Prostate gland (tissue), 2 donors: ENCODE measurements at regions of chr5 and their contacts with region 1.

Region 1: GRCh38 chr5:167723254-167723871 is 568.1 kb upstream of the WWC1 start:
- DNase-seq: peak; percentile 64
- H3K4me3 ChIP-seq: no peak overlapping the region
- H3K27ac ChIP-seq: no peak overlapping the region
- H3K4me1 ChIP-seq: no peaks in the 10 kb centered on the region
- H3K27me3 ChIP-seq: no peaks in the 10 kb centered on the region
- CTCF ChIP-seq: peak; percentile 80 to 89 (median 82)
- POLR2A ChIP-seq: no peak

Region 2: GRCh38 chr5:167770461-167770860 is 47.1 kb after region 1 on chr5:
- intact Hi-C with region 1: no loop called
- DNase-seq: no peak
- H3K4me3 ChIP-seq: no peak overlapping the region
- H3K27ac ChIP-seq: no peak overlapping the region
- H3K4me1 ChIP-seq: no peaks in the 10 kb centered on the region
- H3K27me3 ChIP-seq: no peaks in the 10 kb centered on the region
- CTCF ChIP-seq: no peak
- POLR2A ChIP-seq: no peak

Region 3: DNA sequence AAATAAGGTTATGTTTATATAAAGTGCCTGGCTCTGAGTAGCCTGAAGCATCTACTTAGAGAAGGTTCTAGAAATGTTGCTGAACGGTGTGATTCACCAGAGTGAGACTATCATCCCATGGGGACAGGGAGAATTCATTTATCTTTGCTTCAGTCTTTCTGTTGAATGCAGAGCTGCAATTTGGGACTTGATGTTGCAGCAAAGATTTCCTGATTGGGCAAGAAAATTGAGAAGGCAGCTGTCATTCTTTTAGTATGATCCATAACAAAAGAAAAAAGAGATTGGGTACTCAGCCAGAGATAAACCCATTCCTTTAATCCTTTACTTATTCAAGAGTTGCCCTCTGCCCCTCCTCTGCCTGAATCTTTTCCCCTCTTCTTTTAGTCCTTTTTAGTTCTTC is 111.8 kb after region 1 on chr5:
- intact Hi-C with region 1: loop called (anchors 10 kb)
- DNase-seq: no peak
- H3K4me3 ChIP-seq: no peak overlapping the region
- H3K27ac ChIP-seq: no peak overlapping the region
- H3K4me1 ChIP-seq: no peaks in the 10 kb centered on the region
- H3K27me3 ChIP-seq: no peaks in the 10 kb centered on the region
- CTCF ChIP-seq: no peak
- POLR2A ChIP-seq: no peak

Region 4: GRCh38 chr5:168020542-168021294 is 297.4 kb after region 1 on chr5:
- intact Hi-C with region 1: loop called (anchors 5 kb)
- DNase-seq: no peak
- H3K4me3 ChIP-seq: no peak overlapping the region
- H3K27ac ChIP-seq: no peak overlapping the region
- H3K4me1 ChIP-seq: no peaks in the 10 kb centered on the region
- H3K27me3 ChIP-seq: no peaks in the 10 kb centered on the region
- CTCF ChIP-seq: peak in 1 of 4 experiments; percentile 25
- POLR2A ChIP-seq: no peak

Region 5: DNA sequence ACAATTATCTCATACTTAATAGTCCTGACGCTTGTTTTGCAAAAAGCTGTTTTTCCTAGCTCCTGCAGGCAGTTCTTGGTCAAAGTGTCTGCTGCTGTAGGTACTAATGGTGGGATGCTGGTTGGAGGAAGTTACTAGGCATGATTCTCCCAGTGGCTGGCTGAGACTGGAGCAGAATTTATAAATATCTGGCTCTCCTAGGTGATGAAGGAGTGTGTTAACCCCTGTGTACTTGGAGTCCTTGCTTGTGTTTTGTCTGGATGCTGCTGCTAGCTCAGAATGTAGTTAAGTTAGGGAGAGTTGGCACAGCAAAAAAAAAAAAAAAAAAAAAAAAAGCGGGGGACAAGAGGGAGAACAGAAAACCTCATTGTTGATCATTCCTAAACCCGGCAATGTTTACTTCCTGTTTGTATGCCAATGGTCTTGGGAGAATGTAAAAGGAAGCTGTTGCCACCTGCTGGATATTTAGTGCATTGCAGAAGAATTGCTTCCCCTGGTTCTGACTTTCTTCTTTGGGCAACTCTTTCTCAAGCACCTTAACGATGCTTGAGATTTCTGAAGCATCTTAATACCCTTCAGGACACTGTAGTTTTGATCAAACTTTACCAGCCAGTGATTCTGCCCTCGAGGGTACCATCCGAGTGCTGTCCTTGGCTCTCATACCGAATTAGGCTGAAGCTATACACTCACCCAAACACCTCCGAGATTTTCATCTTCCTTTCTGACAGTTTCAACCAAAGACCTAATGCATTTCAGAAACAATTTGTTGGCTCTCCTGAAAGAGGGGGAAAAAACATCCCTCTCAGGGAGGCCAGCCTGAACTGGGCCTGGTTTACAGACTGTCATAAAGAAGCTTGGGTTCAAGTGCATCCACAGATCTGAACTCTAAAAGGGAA is 496.4 kb after region 1 on chr5:
- intact Hi-C with region 1: loop called (anchors 5 kb)
- DNase-seq: peak; percentile 71
- H3K4me3 ChIP-seq: no peak overlapping the region
- H3K27ac ChIP-seq: no peak overlapping the region
- H3K4me1 ChIP-seq: no peaks in the 10 kb centered on the region
- H3K27me3 ChIP-seq: no peaks in the 10 kb centered on the region
- CTCF ChIP-seq: peak; percentile 69 to 94 (median 89)
- POLR2A ChIP-seq: no peak